Sigmoid colon (tissue), 7 donors: ENCODE measurements at regions of chr6 and their contacts with region 1.

Region 1: DNA sequence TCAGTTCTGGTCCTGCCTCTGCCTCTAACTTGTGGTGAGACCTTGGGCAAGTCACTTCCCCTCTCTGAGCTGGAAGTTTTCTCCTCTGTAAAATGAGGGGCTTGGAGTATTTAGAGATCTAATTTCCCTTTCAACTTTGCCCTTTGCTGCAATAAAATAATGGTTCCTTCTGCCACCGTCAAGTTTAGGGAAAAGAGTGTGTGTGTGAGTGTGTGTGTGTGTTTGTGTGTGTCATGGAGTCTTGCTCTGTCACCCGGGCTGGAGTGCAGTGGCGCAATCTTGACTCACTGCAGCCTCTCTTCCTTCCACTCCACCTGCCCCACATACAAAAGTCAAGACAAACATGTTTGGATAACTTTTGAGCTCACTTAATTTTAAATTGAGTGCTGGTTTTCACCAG is 39.2 kb upstream of the PIM1 start:
- DNase-seq: peak; percentile 88
- H3K4me3 ChIP-seq: no peak overlapping the region
- H3K27ac ChIP-seq: peak overlapping the region; percentile 86 to 97 (median 93)
- H3K4me1 ChIP-seq: peaks cover 0 to 80% (median 54%) of the 10 kb centered on the region in 4 donors
- H3K27me3 ChIP-seq: no peaks in the 10 kb centered on the region
- CTCF ChIP-seq: no peak
- EP300 ChIP-seq: peak in 1 of 4 donors; percentile 10
- POLR2A ChIP-seq: no peak

Region 2: GRCh38 chr6:37059344-37060206 is 71.1 kb before region 1 on chr6:
- intact Hi-C with region 1: loop called (anchors 2 kb)
- DNase-seq: peak; percentile 85
- H3K4me3 ChIP-seq: peak overlapping the region in 1 of 4 donors; percentile 6
- H3K27ac ChIP-seq: peak overlapping the region; percentile 76 to 90 (median 86)
- H3K4me1 ChIP-seq: peaks cover 0 to 15% (median 13%) of the 10 kb centered on the region in 4 donors
- H3K27me3 ChIP-seq: no peaks in the 10 kb centered on the region
- CTCF ChIP-seq: peak in 3 of 4 experiments; percentile 43 to 55 (median 47)
- EP300 ChIP-seq: no peak
- POLR2A ChIP-seq: no peak

Region 3: GRCh38 chr6:37102279-37103168 is 28.2 kb before region 1 on chr6:
- intact Hi-C with region 1: loop called (anchors 1 kb)
- DNase-seq: peak; percentile 96
- H3K4me3 ChIP-seq: peak overlapping the region; percentile 18 to 50 (median 42)
- H3K27ac ChIP-seq: peak overlapping the region; percentile 79 to 87 (median 84)
- H3K4me1 ChIP-seq: peaks cover 0 to 24% (median 20%) of the 10 kb centered on the region in 4 donors
- H3K27me3 ChIP-seq: no peaks in the 10 kb centered on the region
- CTCF ChIP-seq: no peak
- EP300 ChIP-seq: peak in 3 of 4 donors; percentile 31 to 76 (median 59)
- POLR2A ChIP-seq: no peak